ENCODE measurements at regions of chr16 and their contacts with region 1.

Region 1: DNA sequence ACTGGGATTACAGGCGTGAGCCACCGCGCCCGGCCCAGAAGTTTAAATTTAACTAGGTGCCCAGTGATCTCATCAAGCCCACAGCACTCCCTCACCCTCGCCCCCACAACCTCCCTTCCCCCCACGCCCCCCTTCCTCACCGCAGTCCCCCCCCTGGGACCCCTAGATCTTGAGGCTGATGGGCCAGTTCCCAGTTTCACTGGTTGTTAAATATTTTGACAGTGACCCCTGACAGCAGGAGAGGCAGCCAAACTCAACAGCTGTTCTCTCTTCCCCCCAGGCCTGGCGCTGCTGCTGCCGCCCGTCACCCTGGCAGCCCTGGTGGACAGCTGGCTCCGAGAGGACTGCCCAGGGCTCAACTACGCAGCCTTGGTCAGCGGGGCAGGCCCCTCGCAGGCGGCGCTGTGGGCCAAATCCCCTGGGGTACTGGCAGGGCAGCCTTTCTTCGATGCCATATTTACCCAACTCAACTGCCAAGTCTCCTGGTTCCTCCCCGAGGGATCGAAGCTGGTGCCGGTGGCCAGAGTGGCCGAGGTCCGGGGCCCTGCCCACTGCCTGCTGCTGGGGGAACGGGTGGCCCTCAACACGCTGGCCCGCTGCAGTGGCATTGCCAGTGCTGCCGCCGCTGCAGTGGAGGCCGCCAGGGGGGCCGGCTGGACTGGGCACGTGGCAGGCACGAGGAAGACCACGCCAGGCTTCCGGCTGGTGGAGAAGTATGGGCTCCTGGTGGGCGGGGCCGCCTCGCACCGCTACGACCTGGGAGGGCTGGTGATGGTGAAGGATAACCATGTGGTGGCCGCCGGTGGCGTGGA is 15.6 kb downstream of the QPRT start:
- DNase-seq: peak; percentile 27 to 90
- H3K4me3 ChIP-seq: no peak overlapping the region
- H3K27ac ChIP-seq: peak overlapping the region; percentile 58 to 63
- H3K4me1 ChIP-seq: peaks cover 0 to 17% (median 7%) of the 10 kb centered on the region in 4 donors
- H3K27me3 ChIP-seq: peaks cover 0 to 16% of the 10 kb centered on the region in 2 donors
- CTCF ChIP-seq: no peak

Region 2: DNA sequence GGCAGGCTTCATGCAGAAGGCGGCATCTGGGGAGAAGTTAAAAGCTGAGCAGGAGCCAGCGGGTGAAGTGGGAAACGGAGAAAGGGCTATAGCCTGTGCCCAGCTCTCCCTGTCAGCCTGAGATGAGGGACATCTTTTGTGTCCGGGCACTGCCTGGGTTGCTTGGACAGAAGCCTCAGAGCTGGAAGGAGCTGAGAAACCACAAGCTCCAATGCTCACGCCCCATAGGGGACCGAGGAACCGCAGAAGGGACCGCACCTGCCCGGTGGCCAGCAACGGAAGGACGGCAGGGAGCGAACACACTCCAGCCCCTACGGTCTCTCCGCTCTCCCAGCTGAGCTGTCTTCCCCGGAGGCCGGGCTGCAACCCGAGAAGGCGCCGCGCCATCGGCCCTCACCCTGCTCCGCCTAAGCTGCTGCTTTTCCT is 463.9 kb before region 1 on chr16:
- intact Hi-C with region 1: no loop called
- DNase-seq: peak in 1 of 2 donors; percentile 64
- H3K4me3 ChIP-seq: no peak overlapping the region
- H3K27ac ChIP-seq: peak overlapping the region in 1 of 2 donors; percentile 59
- H3K4me1 ChIP-seq: peaks cover 0 to 13% (median 4%) of the 10 kb centered on the region in 4 donors
- H3K27me3 ChIP-seq: no peaks in the 10 kb centered on the region
- CTCF ChIP-seq: no peak

Region 3: DNA sequence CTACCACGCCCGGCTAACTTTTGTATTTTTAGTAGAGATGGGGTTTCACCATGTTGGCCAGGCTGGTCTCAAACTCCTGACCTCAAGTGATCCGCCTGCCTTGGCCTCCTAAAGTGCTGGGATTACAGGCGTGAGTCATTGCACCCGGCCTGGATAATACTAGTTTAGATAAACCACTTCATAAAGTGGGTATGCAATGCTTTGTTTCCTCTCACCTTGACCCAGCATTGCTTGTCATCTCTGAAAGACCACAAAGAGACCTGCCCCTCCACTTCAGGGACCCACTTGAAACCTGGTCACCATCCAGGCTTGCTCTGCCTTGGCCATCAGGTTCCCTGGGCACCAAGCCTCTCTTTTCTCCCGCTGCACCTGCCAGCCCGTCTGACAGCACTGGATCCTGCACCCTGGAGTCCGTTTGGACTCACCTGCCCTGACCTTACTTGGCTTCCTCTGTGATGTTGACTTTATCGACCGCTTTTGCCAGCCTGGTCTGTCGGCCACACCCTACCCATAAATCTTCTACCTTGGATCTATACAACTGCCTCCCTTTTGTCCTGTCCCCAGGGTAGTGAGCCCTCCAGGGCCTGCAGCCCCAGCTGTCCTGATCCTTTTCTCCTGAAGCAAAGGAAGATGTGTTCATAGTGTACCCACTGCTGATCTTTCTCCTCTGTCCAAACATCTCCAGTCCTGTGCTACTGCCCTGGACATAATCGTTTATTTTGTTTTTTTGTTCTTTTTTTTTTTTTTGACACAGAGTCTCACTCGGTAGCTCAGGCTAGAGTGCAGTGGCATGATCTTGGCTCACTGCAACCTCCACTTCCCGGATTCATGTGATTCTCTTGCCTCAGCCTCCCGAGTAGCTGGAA is 70.8 kb after region 1 on chr16:
- intact Hi-C with region 1: no loop called
- DNase-seq: no peak
- H3K4me3 ChIP-seq: no peak overlapping the region
- H3K27ac ChIP-seq: no peak overlapping the region
- H3K4me1 ChIP-seq: no peaks in the 10 kb centered on the region
- H3K27me3 ChIP-seq: peaks cover 0 to 17% of the 10 kb centered on the region in 2 donors
- CTCF ChIP-seq: no peak

Region 4: DNA sequence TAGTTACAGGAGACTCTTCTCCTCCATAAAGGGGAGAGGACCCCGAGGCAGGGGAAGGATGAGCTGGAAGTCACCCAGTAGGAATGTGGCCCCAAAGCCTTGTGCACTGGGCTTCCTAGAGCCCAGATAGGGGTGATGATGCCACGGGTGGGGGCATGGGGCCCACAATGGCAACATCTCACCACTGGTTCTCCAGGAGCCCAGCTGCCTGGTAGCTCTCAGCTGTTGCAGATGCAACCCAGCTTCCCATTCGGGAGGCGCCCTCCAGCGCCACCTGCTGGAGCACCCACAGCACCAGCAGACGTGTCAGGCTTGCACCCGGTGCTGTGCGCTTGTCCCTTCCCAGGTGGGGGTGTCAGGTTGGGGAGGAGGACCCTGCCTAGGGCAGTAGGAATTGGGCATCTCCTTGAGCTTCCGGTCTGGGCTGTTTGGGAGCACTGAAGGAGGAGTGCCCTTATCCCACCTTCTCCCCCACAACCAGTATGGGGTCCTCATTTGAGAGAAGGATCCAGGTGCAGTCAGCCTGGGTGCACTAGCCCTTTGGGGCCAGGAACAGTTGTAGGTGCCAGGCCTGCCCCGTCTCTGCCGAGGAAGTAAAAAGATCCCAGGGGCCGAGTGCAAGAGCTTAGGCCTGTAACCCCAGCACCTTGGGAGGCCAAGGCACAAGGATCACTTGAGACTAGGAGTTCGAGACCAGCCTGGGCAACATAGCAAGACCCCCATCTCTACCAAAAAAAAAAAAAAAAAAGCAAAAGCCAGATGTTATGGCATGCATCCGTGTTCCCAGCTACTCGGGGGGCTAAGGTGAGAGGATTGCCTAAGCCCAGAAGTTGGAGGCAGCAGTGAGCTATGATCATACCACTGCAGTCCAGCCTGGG is 154.1 kb after region 1 on chr16:
- intact Hi-C with region 1: loop called (anchors 5 kb)
- DNase-seq: peak; percentile 68 to 86
- H3K4me3 ChIP-seq: no peak overlapping the region
- H3K27ac ChIP-seq: no peak overlapping the region
- H3K4me1 ChIP-seq: peaks cover 0 to 5% (median 0%) of the 10 kb centered on the region in 4 donors
- H3K27me3 ChIP-seq: no peaks in the 10 kb centered on the region
- CTCF ChIP-seq: peak; percentile 78 to 91

Region 5: DNA sequence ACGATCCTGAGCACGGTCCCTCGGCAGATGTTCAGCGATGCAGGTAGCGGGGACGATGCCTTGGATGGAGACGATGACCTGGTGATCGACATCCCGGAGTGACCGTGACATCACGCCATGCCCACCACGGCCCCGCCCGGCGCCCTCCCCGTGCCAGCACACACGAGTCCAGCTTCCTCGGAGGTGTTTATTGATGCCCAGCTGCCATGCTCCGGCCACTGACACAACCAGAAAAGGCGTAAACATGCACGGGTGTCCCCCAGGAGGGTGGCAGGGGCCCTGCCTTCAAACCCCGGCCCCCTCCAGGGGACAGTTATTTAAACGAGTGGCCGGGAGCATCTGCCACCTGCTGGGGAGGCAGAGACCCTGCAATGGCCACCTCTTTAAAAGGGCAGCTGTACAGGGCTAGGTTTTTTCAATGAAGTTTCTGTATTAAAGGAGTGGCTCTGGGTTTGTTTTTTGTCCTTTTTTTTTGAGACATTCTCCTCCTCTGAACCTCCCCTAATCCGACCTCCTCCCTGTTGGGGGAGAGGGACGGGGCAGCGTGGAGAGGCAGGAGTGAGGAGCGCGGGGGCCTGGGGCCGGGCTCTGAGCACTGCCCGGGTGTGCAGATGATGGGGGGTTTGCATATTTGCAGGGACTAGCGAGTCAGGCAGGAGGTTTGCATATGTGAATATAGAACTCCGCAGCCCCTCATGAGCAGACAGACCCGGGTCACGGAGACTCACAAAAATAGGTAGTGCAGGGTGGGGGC is 310.9 kb after region 1 on chr16:
- intact Hi-C with region 1: loop called (anchors 5 kb)
- DNase-seq: no peak
- H3K4me3 ChIP-seq: no peak overlapping the region
- H3K27ac ChIP-seq: no peak overlapping the region
- H3K4me1 ChIP-seq: peaks cover 0 to 15% (median 4%) of the 10 kb centered on the region in 4 donors
- H3K27me3 ChIP-seq: peaks cover 0 to 43% of the 10 kb centered on the region in 2 donors
- CTCF ChIP-seq: peak; percentile 68 to 76

Region 6: GRCh38 chr16:30024451-30024850 is 329.9 kb after region 1 on chr16:
- intact Hi-C with region 1: loop called (anchors 5 kb)
- DNase-seq: no peak
- H3K4me3 ChIP-seq: no peak overlapping the region
- H3K27ac ChIP-seq: no peak overlapping the region
- H3K4me1 ChIP-seq: peaks cover 0 to 11% (median 9%) of the 10 kb centered on the region in 4 donors
- H3K27me3 ChIP-seq: peaks cover 0 to 71% of the 10 kb centered on the region in 2 donors
- CTCF ChIP-seq: no peak